Ascending aorta (tissue), 2 donors: ENCODE measurements at regions of chr19 and their contacts with region 1.

Region 1: GRCh38 chr19:53867225-53868090 is at the start of gene MYADM:
- DNase-seq: peak; percentile 99 to 100
- H3K4me3 ChIP-seq: peak within 1 kb of the TSS; percentile 86
- H3K27ac ChIP-seq: peak within 1 kb of the TSS; percentile 98 to 99
- H3K4me1 ChIP-seq: peaks cover 3 to 28% of the 10 kb centered on the region in 2 donors
- H3K27me3 ChIP-seq: no peaks in the 10 kb centered on the region
- CTCF ChIP-seq: no peak
- total RNA-seq, gene MYADM: 422 TPM

Region 2: GRCh38 chr19:52527134-52527955 is 1340.1 kb before region 1 on chr19 and contains the start of gene ZNF808:
- intact Hi-C with region 1: loop called (anchors 5 kb)
- DNase-seq: peak; percentile 83 to 98
- H3K4me3 ChIP-seq: peak within 1 kb of the TSS; percentile 74 to 86
- H3K27ac ChIP-seq: peak within 1 kb of the TSS; percentile 92 to 93
- H3K4me1 ChIP-seq: peaks cover 0 to 2% of the 10 kb centered on the region in 2 donors
- H3K27me3 ChIP-seq: no peaks in the 10 kb centered on the region
- CTCF ChIP-seq: peak; percentile 65 to 82 (median 71)
- total RNA-seq, gene ZNF808: 9.0 TPM

Region 3: GRCh38 chr19:53158119-53158656 is 709.3 kb before region 1 on chr19:
- intact Hi-C with region 1: loop called (anchors 5 kb)
- DNase-seq: peak in 1 of 2 donors; percentile 65
- H3K4me3 ChIP-seq: peak overlapping the region; percentile 78 to 86
- H3K27ac ChIP-seq: peak overlapping the region; percentile 78 to 82
- H3K4me1 ChIP-seq: no peaks in the 10 kb centered on the region
- H3K27me3 ChIP-seq: no peaks in the 10 kb centered on the region
- CTCF ChIP-seq: no peak

Region 4: GRCh38 chr19:54102421-54103169 is 235.1 kb after region 1 on chr19 and contains the start of gene NDUFA3:
- intact Hi-C with region 1: loop called (anchors 5 kb)
- DNase-seq: peak; percentile 97 to 99
- H3K4me3 ChIP-seq: peak within 1 kb of the TSS; percentile 72 to 83
- H3K27ac ChIP-seq: peak within 1 kb of the TSS in 1 of 2 donors; percentile 67
- H3K4me1 ChIP-seq: peaks cover 0 to 7% of the 10 kb centered on the region in 2 donors
- H3K27me3 ChIP-seq: no peaks in the 10 kb centered on the region
- CTCF ChIP-seq: no peak
- total RNA-seq, gene NDUFA3: 12.5 TPM

Region 5: GRCh38 chr19:54189735-54190502 is 322.5 kb after region 1 on chr19:
- intact Hi-C with region 1: loop called (anchors 2 kb)
- DNase-seq: peak; percentile 100
- H3K4me3 ChIP-seq: peak overlapping the region; percentile 81 to 85
- H3K27ac ChIP-seq: peak overlapping the region; percentile 100
- H3K4me1 ChIP-seq: peaks cover 6 to 20% of the 10 kb centered on the region in 2 donors
- H3K27me3 ChIP-seq: no peaks in the 10 kb centered on the region
- CTCF ChIP-seq: no peak

Region 6: DNA sequence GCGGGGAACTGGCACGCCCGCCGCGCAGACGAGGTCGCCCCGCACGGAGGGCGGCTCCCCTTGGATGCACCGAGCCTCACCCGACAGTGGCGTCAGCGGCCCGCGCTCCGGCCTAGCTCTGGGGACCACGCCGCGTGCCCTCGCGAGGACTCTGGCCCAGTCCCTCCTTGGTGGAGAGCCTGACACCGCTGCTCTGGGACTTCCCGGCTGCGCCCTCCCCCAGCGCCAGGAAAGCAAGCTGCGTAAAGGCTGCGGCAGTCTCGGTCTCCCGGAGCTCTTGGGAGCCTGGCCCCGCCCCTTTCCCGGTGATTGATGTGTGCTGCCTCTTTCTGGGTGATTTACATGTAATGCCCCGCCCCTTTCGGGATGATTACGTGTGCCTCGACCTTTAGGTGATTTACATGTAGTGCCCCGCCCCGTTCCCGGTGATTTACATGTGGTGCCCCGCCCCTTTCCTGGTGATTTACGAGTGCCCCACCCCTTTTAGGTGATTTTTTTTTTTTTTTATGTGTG is 596.1 kb after region 1 on chr19 and contains the start of gene LENG9:
- intact Hi-C with region 1: loop called (anchors 1 kb)
- DNase-seq: peak; percentile 97 to 100
- H3K4me3 ChIP-seq: peak within 1 kb of the TSS; percentile 71 to 79
- H3K27ac ChIP-seq: peak within 1 kb of the TSS; percentile 97
- H3K4me1 ChIP-seq: peaks cover 14 to 20% of the 10 kb centered on the region in 2 donors
- H3K27me3 ChIP-seq: no peaks in the 10 kb centered on the region
- CTCF ChIP-seq: no peak
- total RNA-seq, gene LENG9: 10.1 TPM